Panc1 (cell line): ENCODE measurements at regions of chr11 and their contacts with region 1.

Region 1: DNA sequence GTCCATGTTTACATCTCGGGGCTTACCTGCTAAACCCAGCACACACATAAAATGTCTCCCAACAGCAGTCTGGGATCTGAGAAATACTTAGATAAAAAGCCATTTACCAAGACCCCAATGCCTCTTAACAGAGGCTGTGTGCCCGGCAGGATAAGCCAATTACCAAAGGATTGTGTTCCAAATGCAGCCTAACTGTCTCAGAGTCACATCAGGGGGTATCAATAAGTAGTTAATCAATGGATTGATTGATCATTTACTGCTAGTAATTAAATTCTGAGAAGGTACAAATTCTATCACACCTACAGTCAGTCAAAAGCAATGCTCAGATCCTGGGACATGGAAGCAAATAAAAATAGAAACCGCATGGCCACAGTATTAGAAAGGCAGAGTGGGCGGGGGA is 125.6 kb downstream of the DSCAML1 start:
- DNase-seq: no peak
- ATAC-seq: no peak
- H3K4me3 ChIP-seq: no peak overlapping the region
- H3K27ac ChIP-seq: no peak overlapping the region
- H3K4me1 ChIP-seq: no peaks in the 10 kb centered on the region
- H3K27me3 ChIP-seq: peaks cover 19% of the 10 kb centered on the region
- CTCF ChIP-seq: no peak

Region 2: GRCh38 chr11:117435326-117435725 is 236.1 kb before region 1 on chr11:
- CTCF ChIA-PET with region 1: no interaction called
- POLR2A ChIA-PET with region 1: no interaction called
- in situ Hi-C with region 1: no loop called
- intact Hi-C with region 1: no loop called
- DNase-seq: no peak
- ATAC-seq: no peak
- H3K4me3 ChIP-seq: no peak overlapping the region
- H3K27ac ChIP-seq: no peak overlapping the region
- H3K4me1 ChIP-seq: no peaks in the 10 kb centered on the region
- H3K27me3 ChIP-seq: peaks cover 5% of the 10 kb centered on the region; the same call in 1 of the 2 replicates
- CTCF ChIP-seq: no peak

Region 3: DNA sequence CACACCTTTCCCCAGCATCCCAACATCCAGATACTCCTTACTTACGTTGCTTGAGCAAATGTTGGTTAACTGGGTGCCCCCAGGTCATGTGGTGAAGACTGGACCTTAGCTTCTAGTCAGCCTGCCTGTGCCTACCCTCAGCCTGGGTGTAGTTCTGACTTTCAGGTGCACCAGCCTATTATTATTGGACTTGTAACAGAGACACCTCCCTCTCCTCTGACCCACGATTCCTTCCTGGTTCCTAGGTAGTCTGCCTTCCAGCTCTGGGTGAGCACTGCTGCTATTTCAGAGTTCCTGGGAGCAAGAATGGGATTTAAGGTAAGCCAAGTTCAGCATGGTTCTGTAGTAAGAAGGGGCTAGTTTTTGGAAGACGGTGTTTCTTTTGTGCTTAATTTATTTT is 12.6 kb before region 1 on chr11:
- CTCF ChIA-PET with region 1: no interaction called
- POLR2A ChIA-PET with region 1: interaction called, 11 read pairs
- in situ Hi-C with region 1: no loop called
- intact Hi-C with region 1: no loop called
- DNase-seq: no peak
- ATAC-seq: no peak
- H3K4me3 ChIP-seq: no peak overlapping the region
- H3K27ac ChIP-seq: no peak overlapping the region
- H3K4me1 ChIP-seq: no peaks in the 10 kb centered on the region
- H3K27me3 ChIP-seq: peaks cover 7% of the 10 kb centered on the region; the same call in 1 of the 2 replicates
- CTCF ChIP-seq: no peak